ENCODE measurements at regions of chr4 and their contacts with region 1.

Region 1: GRCh38 chr4:107376293-107376692 is 340.2 kb upstream of the DKK2 start:
- DNase-seq: no peak
- H3K4me3 ChIP-seq: no peak overlapping the region
- H3K27me3 ChIP-seq: no peaks in the 10 kb centered on the region
- CTCF ChIP-seq: no peak

Region 2: DNA sequence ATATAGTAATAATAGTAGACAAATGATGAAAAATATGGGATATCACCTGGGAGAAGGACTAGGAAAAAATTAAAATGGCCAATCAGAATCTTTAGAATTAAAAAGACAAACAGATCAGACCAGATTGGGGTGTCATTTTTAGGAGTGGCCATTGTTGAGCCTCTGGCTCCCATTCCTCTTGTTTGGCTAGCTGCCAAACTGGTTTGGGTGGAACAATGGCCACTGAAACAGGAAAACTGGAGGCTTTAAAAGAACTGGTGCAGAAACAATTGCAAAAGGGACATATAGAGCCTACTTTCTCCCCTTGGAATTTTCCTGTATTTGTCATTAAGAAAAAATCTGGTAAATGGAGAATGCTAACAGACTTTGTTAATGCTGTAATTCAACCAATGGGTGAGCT is 45.4 kb before region 1 on chr4:
- CTCF ChIA-PET with region 1: no interaction called
- POLR2A ChIA-PET with region 1: interaction called, 14 read pairs
- DNase-seq: no peak
- H3K4me3 ChIP-seq: no peak overlapping the region
- H3K27me3 ChIP-seq: no peaks in the 10 kb centered on the region
- CTCF ChIP-seq: no peak